Heart right ventricle (tissue), 16 donors: ENCODE measurements at regions of chr1 and their contacts with region 1.

Region 1: GRCh38 chr1:35715568-35716002 is 3.1 kb downstream of the C1orf216 start:
- DNase-seq: peak; percentile 58 to 63
- ATAC-seq: peak; percentile 30 to 64 (median 53)
- H3K4me3 ChIP-seq: no peak overlapping the region
- H3K27ac ChIP-seq: no peak overlapping the region
- H3K4me1 ChIP-seq: peaks cover 4 to 41% (median 32%) of the 10 kb centered on the region in 9 donors
- H3K27me3 ChIP-seq: no peaks in the 10 kb centered on the region
- CTCF ChIP-seq: peak; percentile 66 to 92 (median 85)

Region 2: GRCh38 chr1:35641233-35641866 is 74.2 kb before region 1 on chr1 and contains the start of gene PSMB2:
- intact Hi-C with region 1: loop called in 7 of 10 experiments (anchors 2 to 10 kb)
- DNase-seq: peak; percentile 95
- ATAC-seq: peak; percentile 97 to 99 (median 98)
- H3K4me3 ChIP-seq: peak within 1 kb of the TSS; percentile 65 to 95 (median 88)
- H3K27ac ChIP-seq: peak within 1 kb of the TSS; percentile 82 to 96 (median 88)
- H3K4me1 ChIP-seq: peaks cover 7 to 52% (median 45%) of the 10 kb centered on the region in 9 donors
- H3K27me3 ChIP-seq: peaks cover 0 to 29% (median 0%) of the 10 kb centered on the region in 7 donors
- CTCF ChIP-seq: no peak
- total RNA-seq, gene PSMB2: 34.1 to 55.0 (median 39.1) TPM

Region 3: DNA sequence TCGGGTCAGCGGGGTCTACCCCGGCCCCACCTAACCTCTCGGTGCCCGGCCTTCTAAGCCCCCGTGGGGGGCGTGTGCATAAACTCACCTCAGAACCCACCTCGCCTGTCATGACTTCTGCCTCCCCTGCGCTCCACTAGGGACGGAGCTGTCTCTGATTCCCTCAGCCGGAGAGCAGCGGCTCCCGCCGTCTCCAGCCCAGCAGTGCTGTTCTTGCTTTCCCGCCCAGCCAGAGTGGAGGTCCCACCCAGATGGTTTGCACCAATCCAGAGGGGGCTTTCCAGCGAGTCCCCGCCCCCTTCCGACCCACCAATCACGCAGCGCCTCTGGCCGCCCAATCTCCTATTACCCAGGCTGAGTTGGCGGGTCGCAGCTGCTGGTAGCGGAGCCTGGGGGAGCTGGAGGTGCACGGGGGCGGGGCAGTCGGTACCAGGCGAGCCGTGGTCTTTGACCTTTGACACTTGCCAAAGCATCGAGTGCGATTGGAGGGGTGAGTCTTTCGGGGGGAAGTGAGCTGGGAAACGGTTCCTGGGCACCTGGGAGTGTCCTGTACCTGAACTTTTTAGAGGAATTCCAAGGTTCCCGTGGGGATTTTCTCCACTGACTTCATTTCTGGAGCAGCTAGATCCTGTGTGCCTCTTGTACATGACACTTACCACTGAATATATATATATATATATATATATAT is 54.3 kb after region 1 on chr1 and contains the start of gene CLSPN:
- intact Hi-C with region 1: loop called in 1 of 10 experiments (anchors 5 kb)
- DNase-seq: peak; percentile 94 to 96
- ATAC-seq: peak; percentile 99 to 100 (median 99)
- H3K4me3 ChIP-seq: peak within 1 kb of the TSS; percentile 61 to 95 (median 76)
- H3K27ac ChIP-seq: peak within 1 kb of the TSS in 9 of 10 donors; percentile 67 to 86 (median 85)
- H3K4me1 ChIP-seq: peaks cover 0 to 14% (median 6%) of the 10 kb centered on the region in 9 donors
- H3K27me3 ChIP-seq: no peaks in the 10 kb centered on the region
- CTCF ChIP-seq: no peak
- total RNA-seq, gene CLSPN: 0.26 to 2.8 (median 0.43) TPM